ENCODE measurements at regions of chr9 and their contacts with region 1.

Region 1: GRCh38 chr9:97938081-97938644 is at the start of gene HEMGN:
- DNase-seq: no peak
- H3K4me3 ChIP-seq: no peak within 1 kb of the TSS
- H3K4me3 Mint-ChIP-seq: no peak within 1 kb of the TSS
- H3K27ac ChIP-seq: no peak within 1 kb of the TSS
- H3K27ac Mint-ChIP-seq: no peak within 1 kb of the TSS
- H3K4me1 ChIP-seq: peaks cover 0 to 4% of the 10 kb centered on the region in 2 donors
- H3K4me1 Mint-ChIP-seq: peaks cover 9% of the 10 kb centered on the region
- H3K27me3 ChIP-seq: no peaks in the 10 kb centered on the region
- H3K27me3 Mint-ChIP-seq: peaks cover 2 to 5% (median 3%) of the 10 kb centered on the region in 3 donors
- CTCF ChIP-seq: no peak
- polyA plus RNA-seq, gene HEMGN: 0.18 TPM in 1 of 3 donors, not detected in the others

Region 2: DNA sequence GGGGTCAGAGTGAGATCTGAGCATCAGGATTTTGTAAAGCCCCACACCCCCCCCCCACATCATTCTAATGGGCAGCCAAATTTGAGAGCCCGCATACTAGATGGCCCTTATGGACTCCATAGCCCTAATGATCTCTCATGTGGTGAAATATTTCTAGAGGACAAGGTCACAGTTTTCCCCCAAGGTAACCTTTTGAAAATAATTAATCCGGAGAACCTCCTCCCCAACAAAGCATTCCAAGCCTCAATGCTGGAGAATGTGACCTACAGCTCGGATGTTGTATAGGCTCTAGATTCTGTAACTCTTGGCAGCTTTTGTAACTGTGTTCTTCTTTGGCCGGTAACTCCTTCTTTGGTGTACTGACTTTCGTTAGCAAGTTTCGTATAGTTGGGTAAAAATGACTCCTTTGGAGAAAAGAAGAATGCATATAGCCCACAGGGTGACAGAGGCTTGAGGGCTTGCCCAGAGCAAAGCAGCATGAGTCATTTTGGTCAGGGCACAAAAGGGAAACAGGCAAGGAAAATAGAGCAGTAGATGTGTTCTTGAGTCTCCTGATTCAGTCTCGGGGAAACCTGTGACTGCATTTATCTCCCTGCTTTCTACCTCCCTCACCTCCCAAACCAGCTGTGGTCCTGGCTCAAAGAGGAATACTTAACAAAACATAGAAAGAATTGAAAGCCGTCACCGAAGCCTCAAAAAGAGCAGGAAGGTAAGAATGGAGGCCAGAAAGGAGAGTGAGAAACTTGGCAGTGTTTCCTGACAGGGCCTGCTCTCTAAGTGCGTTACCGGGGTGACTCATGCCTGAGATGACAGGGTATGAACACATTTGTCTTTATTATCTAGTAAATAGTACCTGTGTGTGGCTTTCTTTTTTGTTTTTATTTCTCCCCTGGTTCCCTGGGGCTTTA is 234.5 kb before region 1 on chr9:
- intact Hi-C with region 1: loop called in 1 of 2 experiments (anchors 10 kb)
- DNase-seq: peak in 1 of 3 donors; percentile 52
- H3K4me3 ChIP-seq: no peak overlapping the region
- H3K4me3 Mint-ChIP-seq: peak overlapping the region in 1 of 2 donors; percentile 22
- H3K27ac ChIP-seq: no peak overlapping the region
- H3K27ac Mint-ChIP-seq: peak overlapping the region in 1 of 7 donors; percentile 58
- H3K4me1 ChIP-seq: peaks cover 7 to 9% of the 10 kb centered on the region in 2 donors
- H3K4me1 Mint-ChIP-seq: peaks cover 12% of the 10 kb centered on the region
- H3K27me3 ChIP-seq: peaks cover 17 to 42% of the 10 kb centered on the region in 2 donors
- H3K27me3 Mint-ChIP-seq: peaks cover 18 to 56% (median 23%) of the 10 kb centered on the region in 3 donors
- CTCF ChIP-seq: no peak

Region 3: DNA sequence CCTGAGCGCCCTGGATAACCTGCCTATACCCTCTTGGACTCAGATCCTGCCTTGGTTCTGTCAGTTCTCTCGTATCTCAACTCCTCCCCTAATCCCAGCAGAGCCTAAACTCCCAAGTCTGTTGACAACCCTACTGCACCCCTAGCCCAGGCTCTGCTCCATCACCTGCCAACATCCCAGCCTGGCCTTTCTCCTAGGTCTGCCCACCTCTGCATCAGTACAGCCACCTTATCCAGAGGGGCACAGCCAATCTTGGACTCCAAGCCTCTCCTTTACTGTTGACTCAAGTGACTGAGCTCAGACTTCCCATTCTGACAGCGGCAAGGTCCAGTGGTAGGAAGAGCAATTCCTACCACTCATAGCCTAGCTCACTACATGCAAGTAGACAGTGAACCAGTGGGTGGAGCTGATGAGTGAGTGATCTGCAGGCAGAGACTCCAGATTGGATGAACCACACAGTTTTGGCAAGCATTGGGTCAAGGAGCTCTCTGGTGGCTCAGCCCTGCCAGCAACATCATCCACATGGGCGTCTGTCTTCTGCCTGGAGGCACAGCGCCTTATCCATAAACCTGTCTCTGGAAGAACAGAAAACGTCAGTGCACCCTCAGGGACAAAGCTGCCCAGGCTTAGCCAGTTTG is 42.3 kb before region 1 on chr9:
- intact Hi-C with region 1: no loop called
- DNase-seq: peak; percentile 39 to 62 (median 40)
- H3K4me3 ChIP-seq: no peak overlapping the region
- H3K4me3 Mint-ChIP-seq: no peak overlapping the region
- H3K27ac ChIP-seq: no peak overlapping the region
- H3K27ac Mint-ChIP-seq: peak overlapping the region in 1 of 7 donors; percentile 23
- H3K4me1 ChIP-seq: no peaks in the 10 kb centered on the region
- H3K4me1 Mint-ChIP-seq: peaks cover 4% of the 10 kb centered on the region
- H3K27me3 ChIP-seq: no peaks in the 10 kb centered on the region
- H3K27me3 Mint-ChIP-seq: peaks cover 0 to 6% (median 0%) of the 10 kb centered on the region in 3 donors
- CTCF ChIP-seq: peak; percentile 55